Activated CD8-positive, alpha-beta T cell treated with anti-CD3 and anti-CD28 coated beads, Interleukin-2, amount 10 ng/mL, durations not matched to agents 7 days and 5 days (primary cell): ENCODE measurements at regions of chr5 and their contacts with region 1.

Region 1: GRCh38 chr5:1523771-1524480 is at the start of gene LPCAT1:
- DNase-seq: peak; percentile 78
- ATAC-seq: peak; percentile 91
- H3K4me3 Mint-ChIP-seq: peak within 1 kb of the TSS; percentile 87
- H3K27ac Mint-ChIP-seq: peak within 1 kb of the TSS; percentile 81
- H3K4me1 Mint-ChIP-seq: peaks cover 21% of the 10 kb centered on the region
- H3K27me3 Mint-ChIP-seq: no peaks in the 10 kb centered on the region
- total RNA-seq, gene LPCAT1: 60.8 to 68.3 TPM

Region 2: DNA sequence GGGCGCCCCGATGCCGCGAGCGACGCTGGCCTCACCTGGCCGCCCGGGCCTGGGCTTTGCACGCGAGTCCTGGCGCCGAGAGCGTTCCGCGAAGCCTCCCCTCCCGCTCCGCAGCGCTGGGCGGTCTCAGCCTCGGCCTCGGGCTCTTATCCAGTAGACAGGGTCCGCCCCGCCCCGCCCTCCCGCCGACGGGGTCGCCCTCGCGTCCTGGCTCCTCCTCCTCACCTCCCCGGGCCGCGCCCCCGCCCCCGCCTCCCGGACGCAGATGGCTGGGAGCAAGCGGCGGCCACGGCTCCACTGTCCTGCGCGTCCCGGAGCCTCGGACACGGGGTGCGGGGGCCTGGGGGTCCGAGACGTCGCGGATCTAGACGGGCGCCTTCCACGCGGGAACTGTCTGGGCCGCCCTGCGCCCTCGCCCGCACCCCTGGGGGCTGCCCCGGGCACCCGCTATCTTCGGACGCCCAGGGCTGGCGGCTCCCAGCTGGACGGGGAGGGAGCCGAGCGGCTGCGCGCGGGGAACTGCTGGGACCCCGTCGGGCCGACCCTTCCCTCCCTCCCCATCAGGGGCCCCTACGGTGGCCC is 78.5 kb before region 1 on chr5 and contains the start of gene SLC6A3:
- CTCF ChIA-PET with region 1: no interaction called
- POLR2A ChIA-PET with region 1: no interaction called
- DNase-seq: no peak
- ATAC-seq: peak; percentile 22
- H3K4me3 Mint-ChIP-seq: no peak within 1 kb of the TSS
- H3K27ac Mint-ChIP-seq: no peak within 1 kb of the TSS
- H3K4me1 Mint-ChIP-seq: peaks cover 18% of the 10 kb centered on the region
- H3K27me3 Mint-ChIP-seq: peaks cover 55% of the 10 kb centered on the region
- total RNA-seq, gene SLC6A3: not detected

Region 3: DNA sequence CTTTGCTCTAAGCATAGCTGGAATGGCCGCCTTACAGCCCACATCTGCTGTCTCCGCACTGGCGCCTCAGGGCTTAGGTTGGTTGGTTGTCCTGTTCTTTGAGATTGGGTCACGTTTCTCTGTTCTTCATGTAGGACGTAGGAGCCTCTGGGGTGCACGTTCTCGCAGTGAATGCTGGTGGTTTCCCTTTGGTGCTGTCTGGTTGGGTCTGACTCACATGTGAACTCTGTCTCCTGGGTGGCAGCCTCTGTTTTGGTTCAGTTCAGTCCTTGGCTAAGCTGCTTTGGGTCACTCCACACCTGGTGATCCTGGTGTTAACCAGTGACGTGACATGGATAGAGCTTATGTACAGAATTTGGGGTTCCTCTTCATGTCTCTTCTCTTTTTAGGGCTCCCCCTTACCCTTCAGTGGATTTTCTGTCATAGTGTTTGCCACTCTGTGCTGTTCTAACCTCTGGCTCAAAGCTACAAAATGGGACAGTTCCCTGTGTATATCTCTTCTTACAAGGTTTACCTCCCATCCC is 12.5 kb after region 1 on chr5:
- CTCF ChIA-PET with region 1: interaction called, 4 read pairs
- POLR2A ChIA-PET with region 1: interaction called, 12 read pairs
- DNase-seq: peak; percentile 73
- ATAC-seq: peak; percentile 96
- H3K4me3 Mint-ChIP-seq: peak overlapping the region; percentile 68
- H3K27ac Mint-ChIP-seq: peak overlapping the region; percentile 79
- H3K4me1 Mint-ChIP-seq: peaks cover 30% of the 10 kb centered on the region
- H3K27me3 Mint-ChIP-seq: peaks cover 17% of the 10 kb centered on the region